ENCODE measurements at regions of chr1 and their contacts with region 1.

Region 1: GRCh38 chr1:211323156-211324063 is 3.2 kb upstream of the TRAF5 start:
- DNase-seq: peak; percentile 67
- CTCF ChIP-seq: peak; percentile 84

Region 2: GRCh38 chr1:211285196-211285595 is 38.2 kb before region 1 on chr1:
- CTCF ChIA-PET with region 1: interaction called, 10 read pairs
- POLR2A ChIA-PET with region 1: no interaction called
- DNase-seq: no peak
- CTCF ChIP-seq: no peak

Region 3: GRCh38 chr1:211335522-211336157 is 12.2 kb after region 1 on chr1:
- CTCF ChIA-PET with region 1: interaction called, 170 read pairs
- POLR2A ChIA-PET with region 1: no interaction called
- DNase-seq: peak; percentile 58
- CTCF ChIP-seq: no peak

Region 4: DNA sequence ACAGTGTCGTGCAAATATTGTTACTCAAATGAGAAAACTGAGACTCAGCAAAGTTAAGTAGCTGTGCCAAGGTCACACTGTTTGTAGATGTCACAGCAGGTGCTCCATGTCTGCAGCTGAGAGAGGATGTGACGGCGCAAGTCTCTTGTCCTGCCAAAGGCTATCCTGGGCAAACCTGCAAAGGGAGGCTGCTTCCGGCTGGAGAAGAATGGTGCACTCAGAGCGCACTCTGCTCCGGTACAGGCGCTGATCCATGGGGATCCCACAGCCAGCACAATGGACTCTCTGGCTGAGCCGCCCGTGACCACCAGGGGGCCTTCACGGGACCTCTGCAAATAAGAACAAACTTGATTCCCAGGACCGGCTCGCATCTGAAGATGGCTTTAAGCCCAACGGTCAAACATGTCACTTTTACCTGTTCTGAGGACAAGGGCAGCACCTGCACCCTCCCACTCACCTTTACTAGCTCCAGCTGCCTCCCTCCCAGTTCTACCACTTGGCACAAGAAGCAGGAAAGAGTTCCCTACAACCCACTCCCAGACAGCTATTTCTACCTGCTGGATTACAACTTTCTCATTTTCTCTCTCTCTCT is 146.6 kb after region 1 on chr1:
- CTCF ChIA-PET with region 1: interaction called, 23 read pairs
- POLR2A ChIA-PET with region 1: no interaction called
- DNase-seq: peak; percentile 53
- CTCF ChIP-seq: peak; percentile 73

Region 5: DNA sequence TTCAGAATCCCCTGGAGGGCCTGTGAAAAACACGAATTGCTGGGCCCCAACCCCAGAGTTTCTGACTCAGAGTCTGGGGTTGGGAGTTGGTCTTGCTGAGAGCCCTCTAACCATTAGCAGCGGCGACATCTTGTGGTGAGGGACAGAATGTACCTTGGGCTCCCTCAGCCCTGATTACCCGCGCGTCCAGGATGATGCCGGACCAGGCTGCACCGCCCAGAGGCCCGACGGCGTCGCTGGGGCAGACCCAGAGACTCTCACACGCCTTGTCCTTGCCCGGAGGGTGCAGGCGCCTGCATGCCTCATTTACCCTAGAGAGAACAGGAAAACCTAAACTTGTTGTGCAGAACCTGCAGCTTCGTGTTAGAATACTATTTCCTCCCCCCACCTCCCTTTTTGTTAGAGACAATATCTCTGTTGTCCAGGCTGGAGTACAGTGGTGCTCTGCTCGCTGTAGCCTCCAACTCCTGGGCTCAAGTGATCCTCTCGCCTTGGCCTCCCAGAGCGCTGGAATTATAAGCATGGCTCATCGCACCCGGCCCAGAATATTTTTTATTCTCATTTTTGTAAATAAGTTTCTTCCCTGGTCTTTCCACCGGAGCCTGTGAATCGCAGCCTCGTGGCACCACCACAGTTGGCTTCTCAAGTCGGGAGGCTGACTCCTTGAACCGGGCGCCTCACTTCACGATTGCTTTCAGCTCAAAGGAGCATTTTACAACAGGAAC is 190.8 kb after region 1 on chr1:
- CTCF ChIA-PET with region 1: interaction called, 35 read pairs
- POLR2A ChIA-PET with region 1: no interaction called
- DNase-seq: peak; percentile 91
- CTCF ChIP-seq: peak; percentile 74

Measured in GM10248 (cell line).